Left cardiac atrium (tissue), 4 donors: ENCODE measurements at regions of chr5 and their contacts with region 1.

Region 1: DNA sequence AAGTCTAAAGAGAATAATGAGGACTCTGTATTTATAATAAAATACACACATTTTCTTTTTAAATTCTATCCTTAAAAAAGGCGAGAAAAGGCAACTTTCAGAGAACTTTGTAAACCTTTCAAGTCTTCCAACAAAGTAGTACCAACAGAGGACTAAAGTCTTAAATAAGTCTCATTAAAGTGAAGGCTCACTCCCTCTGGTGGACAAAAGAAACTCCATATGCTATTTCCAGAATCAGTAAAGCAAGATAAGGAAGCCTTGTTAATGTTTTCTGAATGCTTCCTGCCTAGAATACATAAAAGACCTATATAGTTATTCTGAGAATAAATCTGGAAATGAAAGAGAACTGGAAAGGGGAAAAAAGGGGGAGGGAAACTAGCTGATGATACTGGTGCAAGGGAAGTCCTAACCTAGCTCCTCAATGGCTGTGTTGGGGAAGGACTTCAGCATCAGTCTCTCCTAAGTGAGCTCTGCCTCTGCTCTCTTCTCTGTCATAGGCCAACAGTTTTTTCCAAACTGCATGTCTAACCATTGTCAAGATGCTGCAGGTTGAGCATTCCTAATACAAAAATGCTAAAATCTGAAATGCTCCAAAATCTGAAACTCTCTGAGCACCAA is 7.2 kb downstream of the HMGCS1 start:
- DNase-seq: no peak
- ATAC-seq: peak; percentile 57 to 58

Region 2: DNA sequence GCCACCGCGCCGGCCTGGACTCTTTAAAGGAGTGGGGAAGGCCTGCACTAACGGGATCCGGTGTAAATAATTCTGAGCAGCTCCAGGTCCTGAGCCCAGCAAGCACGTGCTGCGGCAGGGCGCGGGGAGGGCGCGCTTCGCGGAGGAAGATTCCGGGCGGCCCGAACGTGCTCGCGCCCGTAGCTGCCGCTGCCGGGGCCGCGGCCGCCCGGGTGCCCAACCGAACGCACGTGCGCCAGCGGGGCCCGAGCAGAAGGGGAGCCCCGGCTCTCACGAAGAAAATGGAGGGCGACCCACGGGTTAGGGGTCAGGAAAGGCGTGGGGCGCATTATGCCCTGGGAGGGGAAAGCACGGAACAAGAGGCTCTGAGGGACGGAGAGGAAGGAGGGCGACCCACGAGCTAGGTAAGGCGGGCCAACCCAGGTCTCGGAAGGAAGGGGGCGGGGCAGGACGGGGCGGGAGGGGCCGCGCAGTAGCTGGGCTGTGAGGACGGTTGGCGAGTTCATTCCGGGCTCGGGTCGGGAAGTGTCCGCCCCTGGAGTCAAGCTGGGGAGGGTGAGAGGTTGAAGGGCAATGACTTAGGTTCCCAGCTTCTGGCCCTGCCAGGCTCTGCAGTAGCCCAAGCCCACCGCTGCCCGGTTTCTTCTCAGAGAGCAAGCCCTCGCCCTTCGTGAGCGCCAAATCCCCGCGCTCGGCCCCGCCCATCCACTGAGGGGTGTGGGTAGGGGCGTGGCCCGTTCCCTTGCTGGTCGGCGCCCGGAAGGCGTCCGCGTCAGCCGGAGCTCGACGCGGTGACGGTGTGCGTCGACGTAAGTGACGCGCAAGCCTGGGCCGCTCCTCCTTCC is 185.1 kb before region 1 on chr5 and contains the start of gene ZNF131:
- intact Hi-C with region 1: loop called in 1 of 2 experiments (anchors 10 kb)
- DNase-seq: peak; percentile 97
- ATAC-seq: peak; percentile 97 to 99
- total RNA-seq, gene ZNF131: 13.8 to 20.0 TPM

Region 3: GRCh38 chr5:43191740-43192557 is 114.1 kb before region 1 on chr5 and contains the start of gene NIM1K:
- intact Hi-C with region 1: loop called in 1 of 2 experiments (anchors 10 kb)
- DNase-seq: peak; percentile 74
- ATAC-seq: peak; percentile 87 to 91
- total RNA-seq, gene NIM1K: 0.34 to 0.91 TPM

Region 4: DNA sequence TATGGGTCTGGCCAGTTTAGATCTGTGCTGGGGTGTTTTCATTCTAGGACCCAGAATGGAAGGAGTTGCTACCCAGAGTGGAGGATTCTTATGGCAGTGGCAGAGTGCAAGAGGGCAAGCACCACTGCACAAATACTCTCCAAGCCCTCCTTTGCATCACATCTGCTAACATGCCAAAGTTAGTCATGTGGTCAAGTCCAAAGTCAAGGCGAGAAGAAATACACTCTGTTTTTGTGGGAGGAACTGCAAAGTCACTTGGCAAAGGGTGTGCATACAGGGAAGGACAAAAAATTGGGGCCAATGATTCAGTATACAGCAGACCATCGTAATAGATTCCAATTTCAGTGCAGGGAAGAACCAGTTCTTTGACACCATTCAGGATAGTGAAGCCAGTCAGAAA is 51.0 kb after region 1 on chr5:
- intact Hi-C with region 1: no loop called
- DNase-seq: no peak
- ATAC-seq: peak; percentile 16 to 19

Region 5: DNA sequence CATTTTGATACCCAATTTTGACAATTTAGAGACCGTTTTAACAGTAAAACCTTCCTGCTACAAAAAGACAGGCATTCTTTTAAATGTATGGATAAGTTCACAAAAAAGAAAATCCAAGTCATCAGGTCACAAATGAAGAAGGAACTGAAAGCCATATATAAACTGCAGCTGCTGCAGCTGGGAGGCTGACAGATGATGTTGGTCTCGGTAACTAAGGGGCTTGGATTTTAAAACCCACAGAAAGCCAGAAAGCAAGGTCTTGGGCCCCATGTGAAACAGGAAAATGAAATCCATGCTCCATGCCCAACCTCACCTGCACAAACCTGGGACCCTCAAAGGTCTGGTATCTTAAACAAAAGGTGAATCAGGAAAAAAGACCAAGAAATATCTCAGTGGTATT is 224.6 kb after region 1 on chr5:
- intact Hi-C with region 1: no loop called
- DNase-seq: no peak
- ATAC-seq: no peak